PC-3 (cell line): ENCODE measurements at regions of chr20 and their contacts with region 1.

Region 1: DNA sequence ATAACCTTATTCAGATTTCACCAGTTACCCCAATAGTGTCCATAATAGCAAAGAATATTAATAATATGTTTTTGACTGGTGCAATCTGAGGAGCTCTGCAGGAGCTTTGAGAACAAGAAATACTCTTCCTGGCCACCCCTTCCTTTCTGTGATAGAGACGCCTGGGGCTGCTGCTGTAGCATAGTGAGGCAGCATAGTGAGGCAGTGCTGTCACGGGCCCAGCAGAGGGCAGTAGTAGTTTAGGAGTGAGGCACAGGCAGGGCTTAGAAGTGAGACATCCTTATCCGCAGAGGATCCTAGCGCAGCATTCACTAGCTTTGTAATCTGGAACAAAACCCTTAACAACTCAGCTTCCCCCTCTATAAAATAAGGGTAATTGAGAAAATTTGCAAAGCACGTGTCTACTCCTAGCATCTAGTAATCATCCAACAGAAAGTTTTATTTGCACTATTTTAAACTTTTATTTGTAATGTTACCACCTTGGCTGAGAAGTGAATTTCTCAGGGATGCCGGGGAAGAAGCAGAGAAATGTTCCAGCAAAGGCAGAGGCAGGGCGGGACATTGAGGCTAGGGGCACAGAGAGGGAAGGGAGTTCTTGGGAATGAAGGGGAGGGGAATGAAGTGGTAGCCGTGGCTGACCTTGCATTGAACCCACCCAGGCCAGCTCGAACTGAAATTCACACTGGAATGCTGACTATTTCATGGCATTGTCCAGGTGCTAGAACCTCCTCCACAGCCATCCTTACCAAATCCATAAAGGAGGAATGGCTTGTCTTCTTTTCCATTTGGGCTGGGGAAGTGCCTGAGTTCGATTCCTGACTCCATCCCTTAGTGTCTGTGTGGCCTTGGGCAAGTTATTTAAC is 78.8 kb downstream of the CDS2 start:
- DNase-seq: peak; percentile 86
- ATAC-seq: peak; percentile 100
- H3K4me3 ChIP-seq: no peak overlapping the region
- H3K27ac ChIP-seq: no peak overlapping the region
- H3K4me1 ChIP-seq: no peaks in the 10 kb centered on the region
- H3K27me3 ChIP-seq: no peaks in the 10 kb centered on the region
- CTCF ChIP-seq: peak; percentile 97

Region 2: GRCh38 chr20:5001174-5002076 is 204.2 kb before region 1 on chr20 and contains the start of gene SLC23A2:
- CTCF ChIA-PET with region 1: no interaction called
- POLR2A ChIA-PET with region 1: no interaction called
- intact Hi-C with region 1: no loop called
- DNase-seq: peak; percentile 43
- ATAC-seq: peak; percentile 76
- H3K4me3 ChIP-seq: peak within 1 kb of the TSS; percentile 96
- H3K27ac ChIP-seq: no peak within 1 kb of the TSS
- H3K4me1 ChIP-seq: peaks cover 13% of the 10 kb centered on the region
- H3K27me3 ChIP-seq: no peaks in the 10 kb centered on the region
- CTCF ChIP-seq: no peak
- total RNA-seq, gene SLC23A2: 18.3 and 20.2 TPM in 2 replicates

Region 3: DNA sequence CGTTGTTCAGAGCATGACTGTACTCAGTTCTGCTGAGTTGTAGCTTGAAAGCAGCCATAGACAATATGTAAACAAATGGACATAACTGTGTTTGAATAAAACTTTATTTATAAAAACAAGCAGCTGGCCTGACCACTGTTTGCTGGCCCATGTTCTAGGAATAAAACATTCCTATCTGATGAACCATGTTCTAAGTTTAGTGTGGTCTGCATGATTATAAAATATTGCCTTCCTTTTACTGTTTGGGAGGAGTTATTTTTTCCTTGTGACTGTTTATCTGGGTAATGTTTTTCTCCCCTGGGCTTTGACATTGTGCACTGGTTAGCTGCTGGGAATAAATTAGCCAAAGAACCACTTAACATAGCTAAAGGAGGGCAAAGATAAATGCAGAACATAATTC is 23.6 kb before region 1 on chr20:
- CTCF ChIA-PET with region 1: no interaction called
- POLR2A ChIA-PET with region 1: no interaction called
- intact Hi-C with region 1: no loop called
- DNase-seq: peak; percentile 53
- ATAC-seq: peak; percentile 42
- H3K4me3 ChIP-seq: no peak overlapping the region
- H3K27ac ChIP-seq: no peak overlapping the region; the same call in 1 of the 2 replicates
- H3K4me1 ChIP-seq: peaks cover 17% of the 10 kb centered on the region
- H3K27me3 ChIP-seq: no peaks in the 10 kb centered on the region
- CTCF ChIP-seq: no peak

Region 4: GRCh38 chr20:5222919-5223634 is 17.5 kb after region 1 on chr20:
- CTCF ChIA-PET with region 1: interaction called, 3 read pairs
- POLR2A ChIA-PET with region 1: no interaction called
- intact Hi-C with region 1: loop called (anchors 1 kb)
- DNase-seq: peak; percentile 83
- ATAC-seq: peak; percentile 92
- H3K4me3 ChIP-seq: no peak overlapping the region
- H3K27ac ChIP-seq: no peak overlapping the region
- H3K4me1 ChIP-seq: no peaks in the 10 kb centered on the region
- H3K27me3 ChIP-seq: no peaks in the 10 kb centered on the region; the same call in 1 of the 2 replicates
- CTCF ChIP-seq: peak; percentile 99

Region 5: DNA sequence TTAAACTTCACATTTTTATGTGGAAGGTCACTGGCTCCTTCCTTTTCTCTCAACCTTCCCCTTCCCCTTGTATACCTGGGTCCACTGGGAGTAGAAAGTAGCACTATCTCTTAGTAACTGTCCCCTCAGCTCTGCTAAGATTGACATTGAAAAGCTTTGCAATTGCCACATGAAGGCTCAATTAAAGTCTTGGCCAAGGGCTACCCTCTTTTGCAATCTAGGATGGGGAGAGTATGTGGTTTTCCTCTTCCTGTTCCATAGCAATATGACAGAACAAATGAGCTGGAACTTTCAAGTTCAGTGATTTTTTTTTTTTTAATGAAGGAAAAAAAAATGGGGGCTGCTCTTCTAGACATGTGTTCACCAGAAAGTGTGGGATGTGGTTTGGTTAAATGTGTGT is 74.1 kb after region 1 on chr20:
- CTCF ChIA-PET with region 1: no interaction called
- POLR2A ChIA-PET with region 1: no interaction called
- intact Hi-C with region 1: no loop called
- DNase-seq: no peak
- ATAC-seq: no peak
- H3K4me3 ChIP-seq: no peak overlapping the region
- H3K27ac ChIP-seq: no peak overlapping the region
- H3K4me1 ChIP-seq: no peaks in the 10 kb centered on the region
- H3K27me3 ChIP-seq: peaks cover 65% of the 10 kb centered on the region
- CTCF ChIP-seq: no peak

Region 6: DNA sequence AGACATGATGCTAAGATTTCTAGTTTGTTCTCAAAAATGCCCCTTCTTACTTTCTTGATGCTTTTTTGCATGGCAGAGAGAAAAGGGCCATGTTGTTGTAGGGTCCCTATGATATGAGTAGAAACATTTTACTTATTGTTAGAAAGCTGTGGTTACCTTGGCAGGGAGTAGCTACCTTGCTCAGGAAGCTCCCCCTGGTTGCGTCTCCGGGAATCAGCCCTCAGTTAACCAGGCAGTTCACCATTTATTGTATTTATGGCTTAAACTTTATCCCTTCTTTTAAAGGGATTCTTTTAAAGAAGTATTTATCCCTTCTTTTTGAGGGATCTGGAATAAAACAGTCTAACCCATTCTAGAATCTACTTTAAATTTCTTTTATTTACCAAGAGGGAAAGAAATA is 225.1 kb after region 1 on chr20:
- CTCF ChIA-PET with region 1: no interaction called
- POLR2A ChIA-PET with region 1: no interaction called
- intact Hi-C with region 1: loop called (anchors 5 kb)
- DNase-seq: peak; percentile 20
- ATAC-seq: no peak
- H3K4me3 ChIP-seq: no peak overlapping the region
- H3K27ac ChIP-seq: no peak overlapping the region
- H3K4me1 ChIP-seq: no peaks in the 10 kb centered on the region
- H3K27me3 ChIP-seq: peaks cover 83% of the 10 kb centered on the region
- CTCF ChIP-seq: peak; percentile 47; the same call in 1 of the 2 replicates

Region 7: DNA sequence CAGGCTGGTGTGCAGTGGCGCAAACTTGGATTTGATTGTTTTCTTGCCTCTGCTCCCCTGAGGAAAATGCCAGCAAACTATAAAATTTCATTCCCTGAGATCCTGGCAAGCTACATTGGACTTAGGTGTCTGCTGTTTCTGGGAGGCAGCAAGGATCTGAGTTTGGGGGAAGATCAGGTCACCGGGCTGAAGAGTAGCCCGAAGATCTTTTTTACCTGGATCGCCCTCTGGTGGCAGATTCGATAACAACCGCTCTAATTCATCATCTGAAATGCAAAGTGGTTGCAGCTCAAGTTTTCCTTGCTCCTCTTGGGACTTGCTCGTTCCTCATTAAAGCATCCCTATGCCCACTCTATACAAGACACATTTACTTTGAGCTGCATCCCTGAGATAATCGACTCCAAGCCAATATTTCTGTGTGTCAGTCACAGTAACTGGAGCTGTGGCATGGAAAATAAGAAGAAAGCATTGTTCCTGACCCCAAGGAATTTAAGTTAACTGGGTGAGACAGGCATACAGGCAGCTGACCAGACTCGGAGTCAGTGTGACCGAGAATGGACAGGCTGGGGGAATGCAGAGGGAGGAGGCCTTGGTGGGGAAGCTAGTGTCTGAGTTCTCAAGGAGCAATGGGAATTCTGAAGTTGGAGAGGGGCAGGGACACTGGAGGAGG is 243.0 kb after region 1 on chr20:
- CTCF ChIA-PET with region 1: interaction called, 13 read pairs
- POLR2A ChIA-PET with region 1: no interaction called
- intact Hi-C with region 1: loop called (anchors 1 kb)
- DNase-seq: peak; percentile 79
- ATAC-seq: peak; percentile 40; the same call in 1 of the 2 replicates
- H3K4me3 ChIP-seq: no peak overlapping the region
- H3K27ac ChIP-seq: no peak overlapping the region
- H3K4me1 ChIP-seq: no peaks in the 10 kb centered on the region
- H3K27me3 ChIP-seq: peaks cover 44% of the 10 kb centered on the region
- CTCF ChIP-seq: peak; percentile 84